Activated CD8-positive, alpha-beta memory T cell treated with anti-CD3 and anti-CD28 coated beads, Interleukin-2, amount 10 ng/mL, durations not matched to agents 7 days and 5 days (primary cell): ENCODE measurements at regions of chr2 and their contacts with region 1.

Region 1: GRCh38 chr2:111887819-111888223 is 3.8 kb upstream of the ANAPC1 start:
- DNase-seq: peak; percentile 78
- ATAC-seq: no peak
- H3K4me3 Mint-ChIP-seq: no peak overlapping the region
- H3K27ac Mint-ChIP-seq: no peak overlapping the region
- H3K4me1 Mint-ChIP-seq: peaks cover 7% of the 10 kb centered on the region
- H3K27me3 Mint-ChIP-seq: no peaks in the 10 kb centered on the region

Region 2: GRCh38 chr2:111897924-111898702 is 10.3 kb after region 1 on chr2 and contains the start of gene MERTK:
- CTCF ChIA-PET with region 1: interaction called, 14 read pairs
- DNase-seq: peak; percentile 55
- ATAC-seq: peak; percentile 81
- H3K4me3 Mint-ChIP-seq: peak within 1 kb of the TSS; percentile 55
- H3K27ac Mint-ChIP-seq: no peak within 1 kb of the TSS
- H3K4me1 Mint-ChIP-seq: peaks cover 17% of the 10 kb centered on the region
- H3K27me3 Mint-ChIP-seq: peaks cover 43% of the 10 kb centered on the region
- total RNA-seq, gene MERTK: 0.09 to 0.30 TPM

Region 3: GRCh38 chr2:112048887-112049286 is 161.1 kb after region 1 on chr2:
- CTCF ChIA-PET with region 1: interaction called, 27 read pairs
- DNase-seq: no peak
- ATAC-seq: no peak
- H3K4me3 Mint-ChIP-seq: no peak overlapping the region
- H3K27ac Mint-ChIP-seq: no peak overlapping the region
- H3K4me1 Mint-ChIP-seq: peaks cover 7% of the 10 kb centered on the region
- H3K27me3 Mint-ChIP-seq: peaks cover 19% of the 10 kb centered on the region